ENCODE measurements at regions of chr2 and their contacts with region 1.

Region 1: GRCh38 chr2:202718614-202719013 is 83.8 kb downstream of the FAM117B start:
- DNase-seq: no peak
- ATAC-seq: no peak
- H3K4me3 ChIP-seq: no peak overlapping the region
- H3K4me3 Mint-ChIP-seq: no peak overlapping the region
- H3K27ac ChIP-seq: no peak overlapping the region
- H3K27ac Mint-ChIP-seq: peak overlapping the region; percentile 82
- H3K4me1 ChIP-seq: peaks cover 36% of the 10 kb centered on the region
- H3K4me1 Mint-ChIP-seq: peaks cover 48% of the 10 kb centered on the region
- H3K27me3 ChIP-seq: no peaks in the 10 kb centered on the region
- H3K27me3 Mint-ChIP-seq: no peaks in the 10 kb centered on the region
- CTCF ChIP-seq: no peak

Region 2: GRCh38 chr2:202653890-202654289 is 64.7 kb before region 1 on chr2:
- CTCF ChIA-PET with region 1: no interaction called
- POLR2A ChIA-PET with region 1: no interaction called
- intact Hi-C with region 1: no loop called
- DNase-seq: peak in 1 of 9 experiments; percentile 35
- ATAC-seq: no peak
- H3K4me3 ChIP-seq: no peak overlapping the region
- H3K4me3 Mint-ChIP-seq: peak overlapping the region; percentile 9
- H3K27ac ChIP-seq: no peak overlapping the region
- H3K27ac Mint-ChIP-seq: peak overlapping the region; percentile 85
- H3K4me1 ChIP-seq: peaks cover 74% of the 10 kb centered on the region
- H3K4me1 Mint-ChIP-seq: peaks cover 86% of the 10 kb centered on the region
- H3K27me3 ChIP-seq: peaks cover 0 to 2% of the 10 kb centered on the region in 2 experiments
- H3K27me3 Mint-ChIP-seq: no peaks in the 10 kb centered on the region
- CTCF ChIP-seq: no peak

Region 3: GRCh38 chr2:202681688-202682205 is 36.9 kb before region 1 on chr2:
- CTCF ChIA-PET with region 1: no interaction called
- POLR2A ChIA-PET with region 1: no interaction called
- intact Hi-C with region 1: loop called in 1 of 2 experiments (anchors 5 kb)
- DNase-seq: no peak
- ATAC-seq: no peak
- H3K4me3 ChIP-seq: no peak overlapping the region
- H3K4me3 Mint-ChIP-seq: no peak overlapping the region
- H3K27ac ChIP-seq: no peak overlapping the region
- H3K27ac Mint-ChIP-seq: no peak overlapping the region
- H3K4me1 ChIP-seq: peaks cover 13% of the 10 kb centered on the region
- H3K4me1 Mint-ChIP-seq: peaks cover 35% of the 10 kb centered on the region
- H3K27me3 ChIP-seq: no peaks in the 10 kb centered on the region
- H3K27me3 Mint-ChIP-seq: no peaks in the 10 kb centered on the region
- CTCF ChIP-seq: no peak

Region 4: DNA sequence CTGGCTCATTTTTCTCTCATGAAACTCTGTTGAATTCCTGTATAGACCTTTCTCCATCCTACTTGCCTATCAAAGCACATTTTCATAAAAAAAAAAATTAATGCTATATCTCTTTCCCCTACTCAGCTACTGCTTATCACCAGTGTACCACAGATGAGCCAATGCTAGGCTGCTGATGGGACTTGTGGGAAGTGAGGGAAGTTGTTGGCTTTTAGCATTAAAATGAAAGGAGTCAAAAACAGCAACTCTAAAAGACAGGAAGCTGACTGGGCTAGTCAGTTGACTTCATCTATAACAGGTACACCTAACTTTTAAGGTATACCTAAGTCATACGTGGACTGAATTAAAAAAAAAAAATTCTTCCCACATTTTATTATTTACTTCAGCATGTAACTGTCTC is 18.2 kb after region 1 on chr2:
- CTCF ChIA-PET with region 1: interaction called, 3 read pairs
- POLR2A ChIA-PET with region 1: no interaction called
- intact Hi-C with region 1: loop called in 1 of 2 experiments (anchors 2 kb)
- DNase-seq: peak in 1 of 9 experiments; percentile 17
- ATAC-seq: no peak
- H3K4me3 ChIP-seq: no peak overlapping the region
- H3K4me3 Mint-ChIP-seq: no peak overlapping the region
- H3K27ac ChIP-seq: no peak overlapping the region
- H3K27ac Mint-ChIP-seq: no peak overlapping the region
- H3K4me1 ChIP-seq: peaks cover 16% of the 10 kb centered on the region
- H3K4me1 Mint-ChIP-seq: peaks cover 34% of the 10 kb centered on the region
- H3K27me3 ChIP-seq: no peaks in the 10 kb centered on the region
- H3K27me3 Mint-ChIP-seq: no peaks in the 10 kb centered on the region
- CTCF ChIP-seq: no peak

Region 5: DNA sequence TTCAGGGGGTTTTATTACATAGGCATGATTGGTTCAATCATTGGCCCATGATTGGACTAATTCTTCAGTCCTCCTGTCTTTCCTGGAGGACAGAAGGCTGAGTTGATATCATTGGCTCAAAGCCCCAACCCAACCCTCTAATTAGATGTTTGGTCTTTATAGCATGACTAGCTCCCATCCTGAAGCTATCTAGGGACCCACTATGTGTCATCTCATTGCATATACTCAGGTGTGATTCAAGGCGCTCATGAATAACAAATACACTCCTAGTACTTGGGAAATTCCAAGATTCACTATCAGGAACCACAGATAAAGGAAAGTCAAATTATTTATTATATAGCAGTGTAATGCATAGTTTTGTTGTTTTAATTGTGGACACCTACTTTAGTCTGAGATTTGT is 271.1 kb after region 1 on chr2:
- CTCF ChIA-PET with region 1: no interaction called
- POLR2A ChIA-PET with region 1: no interaction called
- intact Hi-C with region 1: no loop called
- DNase-seq: no peak
- ATAC-seq: no peak
- H3K4me3 ChIP-seq: no peak overlapping the region
- H3K4me3 Mint-ChIP-seq: no peak overlapping the region
- H3K27ac ChIP-seq: no peak overlapping the region
- H3K27ac Mint-ChIP-seq: no peak overlapping the region
- H3K4me1 ChIP-seq: no peaks in the 10 kb centered on the region
- H3K4me1 Mint-ChIP-seq: no peaks in the 10 kb centered on the region
- H3K27me3 ChIP-seq: no peaks in the 10 kb centered on the region
- H3K27me3 Mint-ChIP-seq: no peaks in the 10 kb centered on the region
- CTCF ChIP-seq: no peak